ENCODE measurements at regions of chr3 and their contacts with region 1.

Region 1: GRCh38 chr3:183252973-183253901 is at the start of gene B3GNT5:
- DNase-seq: peak; percentile 87
- H3K4me3 ChIP-seq: peak within 1 kb of the TSS; percentile 72 to 98 (median 96)
- H3K27ac ChIP-seq: peak within 1 kb of the TSS; percentile 99
- H3K4me1 ChIP-seq: peaks cover 14% of the 10 kb centered on the region
- H3K27me3 ChIP-seq: no peaks in the 10 kb centered on the region
- CTCF ChIP-seq: no peak
- total RNA-seq, gene B3GNT5: 9.3 to 54.1 TPM

Region 2: GRCh38 chr3:182980204-182981037 is 272.8 kb before region 1 on chr3 and contains the start of gene DCUN1D1:
- CTCF ChIA-PET with region 1: no interaction called
- dilution Hi-C with region 1: no loop called
- in situ Hi-C with region 1: no loop called
- intact Hi-C with region 1: no loop called
- DNase-seq: peak; percentile 84
- H3K4me3 ChIP-seq: peak within 1 kb of the TSS; percentile 74 to 99 (median 85)
- H3K27ac ChIP-seq: peak within 1 kb of the TSS; percentile 49
- H3K4me1 ChIP-seq: peaks cover 18% of the 10 kb centered on the region
- H3K27me3 ChIP-seq: no peaks in the 10 kb centered on the region
- CTCF ChIP-seq: no peak
- total RNA-seq, gene DCUN1D1: 33.3 to 40.7 TPM

Region 3: DNA sequence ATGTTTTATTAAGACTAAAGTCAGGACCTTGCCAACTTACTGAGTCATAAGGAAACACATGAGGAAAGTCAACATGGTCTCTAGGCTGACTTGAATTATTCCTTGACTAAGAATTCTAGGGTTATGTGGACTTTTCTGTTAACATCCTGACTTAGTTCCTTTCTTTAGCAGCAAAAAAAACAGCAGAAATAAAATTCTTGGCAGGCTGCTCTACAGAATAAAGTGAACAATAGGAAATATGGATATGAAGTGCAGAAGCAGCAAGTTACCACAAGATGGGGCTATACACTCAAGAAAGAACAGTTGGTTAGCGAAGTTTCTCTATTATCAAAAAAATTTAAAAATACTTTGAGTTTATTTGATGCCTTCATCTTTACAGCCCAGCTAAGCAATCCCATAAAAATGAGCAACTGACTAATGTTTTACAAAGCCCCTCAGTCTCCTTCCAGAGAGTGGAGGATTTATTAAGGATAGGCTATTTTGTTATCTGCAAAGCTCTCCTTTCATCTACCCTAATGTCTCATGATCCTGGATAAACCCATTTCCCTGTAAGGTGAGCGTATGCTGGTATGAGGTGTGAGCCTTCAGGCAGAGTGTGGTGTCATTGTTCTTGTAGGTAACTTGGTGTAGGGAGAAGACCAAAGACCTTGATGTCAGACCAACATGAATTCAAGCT is 130.8 kb before region 1 on chr3:
- CTCF ChIA-PET with region 1: no interaction called
- dilution Hi-C with region 1: no loop called
- in situ Hi-C with region 1: no loop called
- intact Hi-C with region 1: loop called (anchors 5 kb)
- DNase-seq: peak; percentile 28
- H3K4me3 ChIP-seq: no peak overlapping the region
- H3K27ac ChIP-seq: no peak overlapping the region
- H3K4me1 ChIP-seq: peaks cover 5% of the 10 kb centered on the region
- H3K27me3 ChIP-seq: no peaks in the 10 kb centered on the region
- CTCF ChIP-seq: peak; percentile 75 to 84

Region 4: DNA sequence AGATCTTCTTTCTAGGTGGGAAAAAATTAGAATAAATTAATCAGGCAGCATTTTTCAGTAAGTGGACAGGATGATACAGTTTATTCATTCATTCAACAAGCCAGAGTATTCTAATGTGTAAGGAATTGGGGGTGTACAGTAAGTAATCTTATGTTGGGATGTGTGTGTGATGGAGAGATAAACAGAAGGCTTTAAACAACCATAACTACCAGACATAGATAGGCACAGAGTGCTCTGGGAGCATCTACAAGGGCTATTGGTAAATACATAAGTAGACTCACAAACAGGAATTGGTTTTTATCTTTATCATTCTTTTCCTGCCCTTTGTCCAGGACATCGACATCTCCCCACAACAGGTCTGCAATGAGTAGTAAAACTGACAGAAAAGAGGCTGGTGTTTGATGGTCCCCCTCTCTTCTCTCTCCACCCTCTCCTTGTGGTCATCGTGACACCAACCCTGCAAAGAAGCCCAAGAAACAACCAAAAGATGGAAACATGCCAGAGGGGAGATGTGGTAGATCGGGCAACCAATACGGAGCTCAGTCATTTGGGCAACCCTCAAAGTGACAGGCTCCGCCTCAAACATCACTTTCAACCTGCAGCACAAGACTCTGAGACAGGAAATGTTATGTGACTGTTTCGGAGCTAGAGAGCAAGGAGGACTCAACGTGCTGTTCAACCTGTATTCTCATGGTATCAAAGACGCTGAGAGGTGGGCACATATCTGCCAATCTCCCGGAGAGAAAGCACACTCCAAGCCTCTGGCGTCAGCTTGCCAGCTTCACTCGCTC is 28.9 kb before region 1 on chr3:
- CTCF ChIA-PET with region 1: no interaction called
- dilution Hi-C with region 1: no loop called
- in situ Hi-C with region 1: no loop called
- intact Hi-C with region 1: no loop called
- DNase-seq: no peak
- H3K4me3 ChIP-seq: no peak overlapping the region
- H3K27ac ChIP-seq: no peak overlapping the region
- H3K4me1 ChIP-seq: no peaks in the 10 kb centered on the region
- H3K27me3 ChIP-seq: no peaks in the 10 kb centered on the region
- CTCF ChIP-seq: no peak

Region 5: DNA sequence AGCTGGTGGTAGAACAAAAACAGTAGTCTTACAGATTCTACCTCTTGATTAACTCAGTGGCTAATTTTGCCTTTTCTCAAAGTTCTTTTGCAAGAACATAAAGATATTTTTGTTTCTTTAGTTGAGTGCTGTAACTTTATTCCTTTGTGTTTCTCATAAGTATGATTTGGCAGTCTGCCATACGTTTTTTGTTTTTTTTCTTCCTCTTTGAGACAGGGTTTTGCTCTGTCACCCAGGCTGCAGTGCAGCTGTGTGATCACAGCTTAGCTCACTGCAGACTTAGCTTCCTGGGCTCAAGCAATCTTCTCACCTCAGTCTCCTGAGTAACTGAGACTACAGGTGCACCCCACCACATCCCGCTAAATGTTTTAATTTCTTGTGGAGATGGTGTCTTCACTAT is 22.2 kb after region 1 on chr3:
- CTCF ChIA-PET with region 1: no interaction called
- dilution Hi-C with region 1: no loop called
- in situ Hi-C with region 1: no loop called
- intact Hi-C with region 1: loop called (anchors 2 kb)
- DNase-seq: peak; percentile 64
- H3K4me3 ChIP-seq: no peak overlapping the region
- H3K27ac ChIP-seq: peak overlapping the region; percentile 55
- H3K4me1 ChIP-seq: peaks cover 29% of the 10 kb centered on the region
- H3K27me3 ChIP-seq: no peaks in the 10 kb centered on the region
- CTCF ChIP-seq: no peak

Region 6: DNA sequence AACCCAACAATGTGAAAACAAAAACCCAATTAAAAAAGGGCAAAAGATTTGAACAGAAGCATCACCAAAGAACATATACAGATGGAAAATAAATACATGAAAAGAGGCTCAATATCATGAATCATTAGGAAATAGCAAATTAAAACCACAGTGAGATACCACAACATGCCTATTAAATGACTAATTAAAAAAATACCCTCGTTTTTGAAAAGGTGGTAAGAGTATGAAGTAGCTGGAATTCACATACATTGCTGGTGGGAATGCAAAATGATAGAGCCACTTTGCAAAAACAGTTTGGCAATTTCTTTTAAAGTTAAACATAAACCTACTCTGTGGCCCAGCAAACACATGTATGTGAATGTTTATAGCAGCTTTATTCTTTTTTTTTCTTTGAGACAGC is 75.6 kb after region 1 on chr3:
- CTCF ChIA-PET with region 1: no interaction called
- dilution Hi-C with region 1: no loop called
- in situ Hi-C with region 1: no loop called
- intact Hi-C with region 1: loop called (anchors 2 kb)
- DNase-seq: peak; percentile 76
- H3K4me3 ChIP-seq: no peak overlapping the region
- H3K27ac ChIP-seq: no peak overlapping the region
- H3K4me1 ChIP-seq: peaks cover 19% of the 10 kb centered on the region
- H3K27me3 ChIP-seq: no peaks in the 10 kb centered on the region
- CTCF ChIP-seq: no peak

Region 7: GRCh38 chr3:183377307-183377959 is 124.2 kb after region 1 on chr3:
- CTCF ChIA-PET with region 1: interaction called, 3 read pairs
- dilution Hi-C with region 1: no loop called
- in situ Hi-C with region 1: loop called in 1 of 2 experiments (anchors 10 kb)
- intact Hi-C with region 1: loop called (anchors 1 kb)
- DNase-seq: peak; percentile 79
- H3K4me3 ChIP-seq: no peak overlapping the region
- H3K27ac ChIP-seq: peak overlapping the region; percentile 57
- H3K4me1 ChIP-seq: peaks cover 35% of the 10 kb centered on the region
- H3K27me3 ChIP-seq: no peaks in the 10 kb centered on the region
- CTCF ChIP-seq: no peak